ENCODE measurements at regions of chr7 and their contacts with region 1.

Region 1: GRCh38 chr7:73738612-73739374 is at the start of gene ABHD11:
- DNase-seq: peak; percentile 96 to 98
- ATAC-seq: peak; percentile 92 to 93
- H3K4me3 ChIP-seq: peak within 1 kb of the TSS; percentile 71 to 98 (median 86)
- H3K27ac ChIP-seq: peak within 1 kb of the TSS; percentile 79 to 88 (median 85)
- H3K4me1 ChIP-seq: peaks cover 0 to 11% of the 10 kb centered on the region in 2 donors
- H3K27me3 ChIP-seq: no peaks in the 10 kb centered on the region
- CTCF ChIP-seq: no peak
- POLR2A ChIP-seq: peak; percentile 51 to 65
- total RNA-seq, gene ABHD11: 3.2 to 9.4 (median 7.6) TPM

Region 2: DNA sequence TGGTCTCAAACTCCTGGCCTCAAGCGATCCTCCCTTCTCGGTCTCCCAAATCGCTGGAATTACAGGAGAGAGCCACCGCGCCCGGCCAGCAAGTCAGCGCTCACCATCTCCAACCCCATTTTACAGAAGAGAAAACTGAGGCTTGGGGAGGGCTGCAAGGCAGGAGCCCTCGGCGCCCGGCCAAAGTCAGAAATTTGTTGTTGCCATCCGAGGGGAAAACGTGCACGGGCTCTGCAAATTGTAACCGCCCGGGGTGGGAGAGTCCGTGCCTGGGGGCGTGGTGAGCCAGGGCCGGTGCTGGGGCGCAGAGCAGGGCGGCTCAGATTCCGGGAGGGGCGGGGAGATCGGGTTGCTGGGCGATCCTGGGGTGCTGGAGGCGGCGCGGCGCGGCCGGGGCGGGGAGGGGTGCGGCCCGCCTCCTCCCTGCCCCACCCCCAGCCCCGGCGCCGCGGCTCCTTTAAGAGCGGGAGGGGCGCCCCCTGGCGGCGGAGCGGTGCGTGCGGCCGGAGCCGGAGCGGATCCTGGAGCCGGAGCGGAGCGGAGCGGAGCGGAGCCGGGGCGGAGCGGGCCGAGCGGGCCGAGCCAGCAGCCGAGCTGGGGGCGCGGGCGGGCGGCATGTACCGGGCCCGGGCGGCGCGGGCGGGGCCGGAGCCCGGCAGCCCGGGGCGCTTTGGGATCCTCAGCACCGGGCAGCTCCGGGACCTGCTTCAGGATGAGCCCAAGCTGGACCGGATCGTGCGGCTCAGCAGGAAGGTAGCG is 71.3 kb before region 1 on chr7 and contains the start of gene VPS37D:
- in situ Hi-C with region 1: no loop called
- intact Hi-C with region 1: loop called (anchors 5 kb)
- DNase-seq: peak; percentile 72 to 79
- ATAC-seq: peak; percentile 95 to 98
- H3K4me3 ChIP-seq: peak within 1 kb of the TSS; percentile 55 to 66 (median 57)
- H3K27ac ChIP-seq: no peak within 1 kb of the TSS
- H3K4me1 ChIP-seq: peaks cover 3 to 8% of the 10 kb centered on the region in 2 donors
- H3K27me3 ChIP-seq: peaks cover 0 to 3% (median 0%) of the 10 kb centered on the region in 3 donors
- CTCF ChIP-seq: peak in 4 of 5 experiments; percentile 95 to 98 (median 97)
- POLR2A ChIP-seq: no peak
- total RNA-seq, gene VPS37D: 0.64 to 2.5 (median 1.4) TPM

Region 3: DNA sequence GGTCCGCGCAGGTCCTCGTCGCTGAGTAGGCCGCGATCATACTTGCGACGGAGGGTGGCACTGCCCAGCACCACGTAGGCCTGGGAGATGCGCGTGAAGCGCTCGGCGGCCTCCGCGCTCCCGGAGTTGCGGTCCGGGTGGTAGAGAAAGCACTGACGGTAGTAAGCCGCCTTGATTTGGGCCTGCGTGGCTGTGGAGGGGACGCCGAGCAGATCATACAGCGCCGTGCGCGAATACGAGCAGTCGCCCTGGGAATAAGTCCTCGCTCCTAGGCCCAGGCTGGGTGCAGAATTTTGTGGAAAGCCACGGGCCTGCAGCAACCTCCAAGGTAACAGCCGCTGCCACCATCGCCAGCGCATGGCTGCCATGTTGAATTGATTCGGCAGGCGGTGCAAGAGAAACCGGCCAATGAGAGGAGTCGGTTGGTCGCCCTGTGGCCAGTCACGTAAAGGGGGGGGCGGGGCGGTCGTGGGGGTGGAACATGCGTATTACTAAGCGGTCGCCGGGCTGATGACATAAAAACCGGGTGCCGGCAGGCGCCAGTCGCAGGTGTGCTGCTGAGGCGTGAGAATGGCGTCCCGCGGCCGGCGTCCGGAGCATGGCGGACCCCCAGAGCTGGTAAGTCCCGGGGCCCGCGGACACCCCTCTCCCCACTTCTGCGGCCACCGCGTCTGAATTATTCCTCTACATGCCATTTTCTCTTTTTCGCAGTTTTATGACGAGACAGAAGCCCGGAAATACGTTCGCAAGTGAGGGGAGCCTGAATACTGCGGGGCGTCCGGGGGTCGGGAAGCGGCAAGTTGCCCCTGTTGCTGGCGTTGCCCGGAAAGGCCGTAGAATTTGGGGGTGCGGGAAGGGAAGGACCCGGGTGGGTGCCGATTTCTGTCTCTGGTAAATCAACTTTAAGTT is 55.5 kb before region 1 on chr7 and contains the starts of genes BUD23 and DNAJC30:
- in situ Hi-C with region 1: no loop called
- intact Hi-C with region 1: loop called (anchors 2 kb)
- DNase-seq: peak; percentile 98
- ATAC-seq: peak; percentile 98
- H3K4me3 ChIP-seq: peak within 1 kb of the TSS; percentile 91 to 99 (median 94)
- H3K27ac ChIP-seq: peak within 1 kb of the TSS; percentile 83 to 96 (median 92)
- H3K4me1 ChIP-seq: peaks cover 36% of the 10 kb centered on the region in 2 donors
- H3K27me3 ChIP-seq: no peaks in the 10 kb centered on the region
- CTCF ChIP-seq: peak in 1 of 5 experiments; percentile 27
- POLR2A ChIP-seq: peak; percentile 84 to 89
- total RNA-seq, gene BUD23: 83.9 to 128 (median 114) TPM
- total RNA-seq, gene DNAJC30: 3.9 to 10.5 (median 5.6) TPM

Region 4: GRCh38 chr7:73718905-73719805 is 19.6 kb before region 1 on chr7 and contains the start of gene STX1A:
- in situ Hi-C with region 1: no loop called
- intact Hi-C with region 1: loop called (anchors 1 kb)
- DNase-seq: peak; percentile 36 to 62
- ATAC-seq: peak; percentile 76 to 83
- H3K4me3 ChIP-seq: peak within 1 kb of the TSS; percentile 65 to 95 (median 81)
- H3K27ac ChIP-seq: peak within 1 kb of the TSS; percentile 43 to 78 (median 60)
- H3K4me1 ChIP-seq: peaks cover 10 to 28% of the 10 kb centered on the region in 2 donors
- H3K27me3 ChIP-seq: no peaks in the 10 kb centered on the region
- CTCF ChIP-seq: no peak
- POLR2A ChIP-seq: peak; percentile 51 to 72
- total RNA-seq, gene STX1A: 0.83 to 8.1 (median 3.2) TPM

Region 5: DNA sequence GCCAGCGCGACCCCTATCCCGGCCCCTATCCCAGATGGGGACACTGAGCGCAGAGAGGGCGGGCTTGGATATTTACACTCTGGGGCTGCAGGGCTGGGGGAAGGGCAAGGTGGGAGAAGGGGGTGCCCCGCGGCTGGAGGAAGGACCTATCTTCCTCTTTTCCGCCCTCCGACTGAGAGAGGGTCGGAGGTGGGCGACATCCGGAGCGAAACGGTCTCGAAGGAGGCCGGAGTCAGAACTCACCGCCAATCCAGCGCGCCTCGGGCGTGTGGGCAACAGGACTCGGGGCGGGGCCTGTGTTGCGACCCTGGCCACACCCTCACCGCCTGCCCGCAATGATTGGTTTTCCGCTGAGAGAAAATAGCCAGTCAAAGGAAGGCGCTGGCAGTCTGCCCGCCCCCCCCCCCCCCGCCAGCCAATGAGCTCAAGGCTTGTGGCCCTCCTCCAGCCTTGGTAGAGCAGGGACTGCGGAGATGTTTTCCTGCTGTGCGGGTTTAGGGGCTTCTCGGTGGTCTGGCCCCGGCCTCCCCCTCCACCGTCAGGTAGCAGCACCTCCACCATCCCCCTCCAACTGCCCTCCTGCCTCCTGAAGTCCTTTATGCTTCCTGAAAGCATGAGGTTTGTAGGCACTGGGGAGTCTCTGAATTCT is 103.6 kb after region 1 on chr7 and contains the start of gene METTL27:
- in situ Hi-C with region 1: no loop called
- intact Hi-C with region 1: loop called (anchors 5 kb)
- DNase-seq: peak; percentile 91 to 92
- ATAC-seq: peak; percentile 94 to 98
- H3K4me3 ChIP-seq: peak within 1 kb of the TSS; percentile 64 to 82 (median 72)
- H3K27ac ChIP-seq: peak within 1 kb of the TSS; percentile 66 to 73 (median 66)
- H3K4me1 ChIP-seq: peaks cover 6 to 7% of the 10 kb centered on the region in 2 donors
- H3K27me3 ChIP-seq: no peaks in the 10 kb centered on the region
- CTCF ChIP-seq: no peak
- POLR2A ChIP-seq: peak; percentile 51 to 63
- total RNA-seq, gene METTL27: 0.36 to 1.5 (median 0.53) TPM

Measured in gastrocnemius medialis (tissue), 4 donors.